AG04449 (cell line): ENCODE measurements at regions of chr3 and their contacts with region 1.

Region 1: DNA sequence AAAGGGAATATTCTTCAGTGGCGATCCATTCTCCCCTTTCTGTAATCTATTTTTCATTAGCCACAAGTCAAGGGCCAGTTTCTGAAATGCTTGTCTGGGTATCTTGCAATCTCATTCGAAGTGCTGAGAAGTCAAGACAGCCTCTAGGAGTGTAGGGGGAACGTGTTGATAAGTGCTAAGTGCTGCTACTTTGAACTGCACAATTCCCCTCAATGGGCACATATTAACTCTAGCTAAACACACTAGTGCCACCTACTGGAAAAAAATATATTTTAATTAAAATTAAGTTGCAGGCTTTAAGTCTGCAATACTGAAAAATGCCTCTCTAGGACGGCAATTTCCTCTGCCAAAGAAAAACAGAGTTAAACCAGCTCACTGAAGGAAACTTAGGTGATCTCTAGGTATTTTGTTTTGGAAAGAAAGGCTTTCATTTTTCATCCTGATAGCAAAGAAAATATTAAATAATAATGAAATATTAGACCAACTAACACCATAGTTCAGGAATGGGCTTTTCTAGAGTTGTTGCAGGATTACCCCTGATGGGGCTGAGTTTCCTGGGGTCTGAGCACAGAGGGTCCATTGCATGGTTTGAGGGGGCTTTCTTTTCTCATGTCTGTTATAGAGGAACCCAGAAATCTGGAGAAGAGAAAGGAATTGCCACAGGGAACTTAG is 181.9 kb upstream of the KBTBD8 start:
- DNase-seq: peak; percentile 36
- H3K4me3 ChIP-seq: no peak overlapping the region
- CTCF ChIP-seq: peak; percentile 24

Region 2: GRCh38 chr3:66490214-66490613 is 326.0 kb before region 1 on chr3:
- CTCF ChIA-PET with region 1: interaction called, 19 read pairs
- POLR2A ChIA-PET with region 1: no interaction called
- DNase-seq: no peak
- H3K4me3 ChIP-seq: no peak overlapping the region
- CTCF ChIP-seq: no peak

Region 3: GRCh38 chr3:66803206-66803605 is 13.0 kb before region 1 on chr3:
- CTCF ChIA-PET with region 1: interaction called, 33 read pairs
- POLR2A ChIA-PET with region 1: interaction called, 4 read pairs
- DNase-seq: no peak
- H3K4me3 ChIP-seq: no peak overlapping the region
- CTCF ChIP-seq: no peak

Region 4: GRCh38 chr3:66830301-66830700 is 14.1 kb after region 1 on chr3:
- CTCF ChIA-PET with region 1: interaction called, 17 read pairs
- POLR2A ChIA-PET with region 1: no interaction called
- DNase-seq: no peak
- H3K4me3 ChIP-seq: no peak overlapping the region
- CTCF ChIP-seq: no peak

Region 5: GRCh38 chr3:67090474-67090873 is 274.2 kb after region 1 on chr3:
- CTCF ChIA-PET with region 1: no interaction called
- POLR2A ChIA-PET with region 1: no interaction called
- DNase-seq: peak; percentile 45
- H3K4me3 ChIP-seq: no peak overlapping the region
- CTCF ChIP-seq: no peak

Region 6: GRCh38 chr3:67263866-67264265 is 447.6 kb after region 1 on chr3:
- CTCF ChIA-PET with region 1: no interaction called
- POLR2A ChIA-PET with region 1: no interaction called
- DNase-seq: no peak
- H3K4me3 ChIP-seq: no peak overlapping the region
- CTCF ChIP-seq: no peak